ENCODE measurements at regions of chr4 and their contacts with region 1.

Region 1: GRCh38 chr4:15231265-15232091 is 196.4 kb upstream of the C1QTNF7 start:
- DNase-seq: peak; percentile 92
- H3K4me3 ChIP-seq: no peak overlapping the region
- H3K27ac ChIP-seq: no peak overlapping the region
- H3K4me1 ChIP-seq: peaks cover 10% of the 10 kb centered on the region
- H3K27me3 ChIP-seq: no peaks in the 10 kb centered on the region
- CTCF ChIP-seq: peak; percentile 72 to 78 (median 78)
- POLR2A ChIP-seq: no peak

Region 2: DNA sequence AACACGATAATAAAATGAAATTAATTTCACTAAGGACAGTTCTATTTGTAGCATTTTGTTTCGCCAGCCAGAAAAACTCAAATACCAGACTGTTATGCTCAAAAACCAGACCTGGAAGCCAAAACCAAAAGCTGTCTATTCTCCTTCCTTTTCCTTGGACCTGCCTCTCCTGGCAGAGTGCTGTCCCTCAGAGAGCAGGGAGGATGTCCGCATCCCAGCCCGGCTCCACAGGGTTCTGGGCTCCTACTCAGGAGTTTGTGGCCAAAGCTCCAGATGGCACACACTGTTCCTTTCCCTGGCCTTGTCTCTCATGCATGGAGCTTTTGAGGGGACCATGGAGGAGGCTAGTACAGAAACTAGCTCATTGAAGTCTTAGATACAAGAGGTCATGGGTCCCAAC is 154.4 kb after region 1 on chr4:
- intact Hi-C with region 1: loop called (anchors 10 kb)
- DNase-seq: peak; percentile 49
- H3K4me3 ChIP-seq: no peak overlapping the region
- H3K27ac ChIP-seq: peak overlapping the region in 1 of 2 donors; percentile 38
- H3K4me1 ChIP-seq: peaks cover 12% of the 10 kb centered on the region
- H3K27me3 ChIP-seq: no peaks in the 10 kb centered on the region
- CTCF ChIP-seq: no peak
- POLR2A ChIP-seq: no peak

Region 3: GRCh38 chr4:15420642-15421041 is 189.2 kb after region 1 on chr4:
- intact Hi-C with region 1: no loop called
- DNase-seq: no peak
- H3K4me3 ChIP-seq: no peak overlapping the region
- H3K27ac ChIP-seq: no peak overlapping the region
- H3K4me1 ChIP-seq: peaks cover 2% of the 10 kb centered on the region
- H3K27me3 ChIP-seq: no peaks in the 10 kb centered on the region
- CTCF ChIP-seq: no peak
- POLR2A ChIP-seq: no peak

Region 4: GRCh38 chr4:15536552-15537499 is 305.3 kb after region 1 on chr4:
- intact Hi-C with region 1: no loop called
- DNase-seq: no peak
- H3K4me3 ChIP-seq: no peak overlapping the region
- H3K27ac ChIP-seq: no peak overlapping the region
- H3K4me1 ChIP-seq: no peaks in the 10 kb centered on the region
- H3K27me3 ChIP-seq: no peaks in the 10 kb centered on the region
- CTCF ChIP-seq: no peak
- POLR2A ChIP-seq: no peak